Transverse colon (tissue), 4 donors: ENCODE measurements at regions of chr17 and their contacts with region 1.

Region 1: GRCh38 chr17:44385287-44386181 is 3.9 kb downstream of the ITGA2B start:
- DNase-seq: peak; percentile 84
- H3K4me3 ChIP-seq: peak overlapping the region; percentile 24 to 58 (median 38)
- H3K27ac ChIP-seq: no peak overlapping the region
- H3K4me1 ChIP-seq: peaks cover 3 to 18% (median 15%) of the 10 kb centered on the region in 4 donors
- H3K27me3 ChIP-seq: peaks cover 30% of the 10 kb centered on the region
- CTCF ChIP-seq: no peak
- EP300 ChIP-seq: no peak
- POLR2A ChIP-seq: no peak

Region 2: DNA sequence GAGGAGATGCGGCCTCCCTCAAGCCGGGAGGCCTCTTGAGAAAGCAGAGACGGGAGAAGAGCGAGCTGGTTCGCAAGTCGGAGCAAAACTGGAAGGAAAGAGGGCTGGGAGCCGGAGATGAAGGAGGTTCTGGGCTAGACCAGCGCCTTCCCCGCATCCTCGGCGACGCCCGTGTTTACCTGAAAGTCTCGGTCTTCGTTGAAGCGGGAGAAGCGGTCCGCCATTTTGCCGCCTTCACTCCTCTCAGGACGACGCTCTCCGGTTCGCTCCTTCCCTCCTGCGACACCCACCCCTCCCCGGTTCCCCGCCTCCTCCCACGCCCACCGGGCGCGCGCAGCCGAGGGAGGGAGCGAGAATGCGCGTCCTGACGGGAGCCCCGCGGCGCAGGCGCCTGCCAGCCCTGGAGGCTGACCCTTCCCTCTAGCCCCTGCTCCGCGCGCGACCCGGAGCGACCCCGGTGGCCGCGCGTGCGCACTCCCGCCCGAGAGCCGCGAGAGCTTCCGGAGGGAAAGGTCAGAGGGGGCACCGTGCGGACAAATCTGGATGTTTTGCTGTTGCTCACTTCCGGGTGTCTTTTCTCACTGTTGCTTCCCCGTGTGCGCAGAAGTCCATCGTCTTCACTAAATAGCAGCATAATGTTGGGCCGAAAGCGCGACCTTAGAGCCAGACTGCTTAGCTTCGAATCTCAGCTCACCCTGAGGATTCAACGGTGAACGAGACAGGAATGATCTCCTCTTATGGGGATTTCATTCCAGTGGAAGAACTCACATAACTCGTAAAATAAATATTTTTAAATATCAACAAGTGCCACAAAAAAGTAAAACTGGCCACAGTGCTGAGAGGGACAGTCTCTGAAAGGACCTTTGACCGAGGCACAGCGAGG is 117.9 kb after region 1 on chr17 and contains the start of gene GPATCH8:
- in situ Hi-C with region 1: loop called in 1 of 4 experiments (anchors 25 kb)
- intact Hi-C with region 1: no loop called
- DNase-seq: peak; percentile 96
- H3K4me3 ChIP-seq: peak within 1 kb of the TSS; percentile 46 to 91 (median 82)
- H3K27ac ChIP-seq: peak within 1 kb of the TSS; percentile 92 to 96 (median 94)
- H3K4me1 ChIP-seq: peaks cover 4 to 46% (median 31%) of the 10 kb centered on the region in 4 donors
- H3K27me3 ChIP-seq: peaks cover 2% of the 10 kb centered on the region
- CTCF ChIP-seq: no peak
- EP300 ChIP-seq: no peak
- POLR2A ChIP-seq: peak; percentile 79
- total RNA-seq, gene GPATCH8: 14.5 to 53.1 (median 31.2) TPM